GM23248 (cell line): ENCODE measurements at regions of chr9 and their contacts with region 1.

Region 1: GRCh38 chr9:136493567-136493971 is 10.7 kb upstream of the SEC16A start:
- DNase-seq: no peak
- H3K4me3 ChIP-seq: no peak overlapping the region
- H3K27ac ChIP-seq: no peak overlapping the region
- H3K4me1 ChIP-seq: peaks cover 4% of the 10 kb centered on the region; the same call in 1 of the 2 replicates
- H3K27me3 ChIP-seq: no peaks in the 10 kb centered on the region

Region 2: GRCh38 chr9:136292591-136293448 is 200.7 kb before region 1 on chr9:
- in situ Hi-C with region 1: no loop called
- DNase-seq: peak; percentile 72
- H3K4me3 ChIP-seq: no peak overlapping the region
- H3K27ac ChIP-seq: no peak overlapping the region
- H3K4me1 ChIP-seq: no peaks in the 10 kb centered on the region
- H3K27me3 ChIP-seq: peaks cover 27% of the 10 kb centered on the region; the same call in 1 of the 2 replicates

Region 3: DNA sequence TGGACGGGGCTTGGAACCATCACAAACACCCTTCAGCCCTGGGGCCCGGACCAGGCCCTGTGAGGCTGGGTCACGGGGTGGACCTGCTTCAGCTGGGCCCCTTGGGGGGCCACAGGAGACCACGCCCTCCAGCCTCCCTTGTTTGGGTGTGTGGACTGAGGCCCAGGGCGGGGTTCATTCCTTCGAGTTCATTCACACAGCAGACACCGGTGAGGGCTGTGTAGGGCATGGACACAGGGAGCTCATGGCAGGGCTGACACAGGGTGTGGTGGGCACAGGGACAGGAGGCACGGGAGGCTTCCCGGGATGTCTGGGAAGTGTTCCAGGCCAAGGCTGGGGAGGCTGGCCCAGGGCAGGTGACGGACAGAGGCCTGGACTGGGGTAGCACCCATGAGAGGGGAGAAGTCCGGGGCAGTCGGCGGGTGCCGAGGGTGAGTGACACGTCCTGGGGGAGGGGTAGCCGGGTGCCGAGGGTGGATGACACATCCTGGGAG is 138.9 kb before region 1 on chr9:
- in situ Hi-C with region 1: no loop called
- DNase-seq: peak; percentile 77
- H3K4me3 ChIP-seq: no peak overlapping the region
- H3K27ac ChIP-seq: peak overlapping the region; percentile 33; the same call in 1 of the 2 replicates
- H3K4me1 ChIP-seq: peaks cover 8% of the 10 kb centered on the region
- H3K27me3 ChIP-seq: no peaks in the 10 kb centered on the region

Region 4: GRCh38 chr9:136619742-136620440 is 126.3 kb after region 1 on chr9:
- in situ Hi-C with region 1: loop called (anchors 5 kb)
- DNase-seq: no peak
- H3K4me3 ChIP-seq: no peak overlapping the region
- H3K27ac ChIP-seq: no peak overlapping the region
- H3K4me1 ChIP-seq: no peaks in the 10 kb centered on the region
- H3K27me3 ChIP-seq: no peaks in the 10 kb centered on the region